ENCODE measurements at regions of chr15 and their contacts with region 1.

Region 1: GRCh38 chr15:73273181-73274002 is 95.4 kb downstream of the HCN4 start:
- DNase-seq: no peak
- H3K4me3 ChIP-seq: no peak overlapping the region
- H3K27me3 ChIP-seq: no peaks in the 10 kb centered on the region
- CTCF ChIP-seq: peak; percentile 76

Region 2: DNA sequence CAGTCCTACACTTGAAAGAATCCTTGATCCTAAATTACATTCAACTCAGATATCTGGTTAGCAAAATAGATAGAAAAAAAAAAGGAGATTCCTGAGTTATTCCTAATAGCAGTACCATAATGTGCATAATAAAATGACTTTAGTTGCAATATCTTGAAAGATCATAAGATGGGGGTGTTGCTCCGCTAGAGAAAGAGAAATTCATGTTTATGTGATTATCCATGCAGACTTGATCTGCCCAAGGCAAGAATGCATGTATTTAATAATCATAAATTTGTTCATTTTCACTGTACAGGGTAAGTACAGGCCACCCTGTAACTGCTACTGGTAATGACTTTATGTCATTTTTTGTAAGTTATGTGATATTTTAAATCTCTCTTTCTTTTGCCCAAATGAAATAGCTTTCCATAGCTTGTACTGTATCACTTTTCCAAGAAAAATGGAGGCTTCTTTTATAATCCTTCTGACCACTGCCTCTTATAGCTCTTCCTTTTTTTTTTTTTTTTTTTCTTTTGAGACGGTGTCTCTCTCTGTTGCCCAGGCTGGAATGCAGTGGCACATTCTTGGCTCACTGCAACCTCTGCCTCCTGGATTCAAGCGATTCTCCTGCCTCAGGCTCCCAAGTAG is 10.8 kb after region 1 on chr15:
- CTCF ChIA-PET with region 1: interaction called, 13 read pairs
- POLR2A ChIA-PET with region 1: no interaction called
- DNase-seq: no peak
- H3K4me3 ChIP-seq: no peak overlapping the region
- H3K27me3 ChIP-seq: no peaks in the 10 kb centered on the region
- CTCF ChIP-seq: peak; percentile 31; the same call in 1 of the 2 replicates

Region 3: GRCh38 chr15:73388256-73388781 is 114.9 kb after region 1 on chr15:
- CTCF ChIA-PET with region 1: no interaction called
- POLR2A ChIA-PET with region 1: no interaction called
- DNase-seq: peak; percentile 8
- H3K4me3 ChIP-seq: no peak overlapping the region
- H3K27me3 ChIP-seq: no peaks in the 10 kb centered on the region; the same call in 1 of the 2 replicates
- CTCF ChIP-seq: no peak

Measured in BJ (cell line).